ENCODE measurements at regions of chr3 and their contacts with region 1.

Region 1: GRCh38 chr3:27467545-27467944 is 16.6 kb downstream of the SLC4A7 start:
- DNase-seq: no peak
- H3K4me3 Mint-ChIP-seq: no peak overlapping the region
- H3K27ac Mint-ChIP-seq: peak overlapping the region; percentile 28
- H3K4me1 Mint-ChIP-seq: peaks cover 14% of the 10 kb centered on the region
- H3K27me3 Mint-ChIP-seq: no peaks in the 10 kb centered on the region

Region 2: DNA sequence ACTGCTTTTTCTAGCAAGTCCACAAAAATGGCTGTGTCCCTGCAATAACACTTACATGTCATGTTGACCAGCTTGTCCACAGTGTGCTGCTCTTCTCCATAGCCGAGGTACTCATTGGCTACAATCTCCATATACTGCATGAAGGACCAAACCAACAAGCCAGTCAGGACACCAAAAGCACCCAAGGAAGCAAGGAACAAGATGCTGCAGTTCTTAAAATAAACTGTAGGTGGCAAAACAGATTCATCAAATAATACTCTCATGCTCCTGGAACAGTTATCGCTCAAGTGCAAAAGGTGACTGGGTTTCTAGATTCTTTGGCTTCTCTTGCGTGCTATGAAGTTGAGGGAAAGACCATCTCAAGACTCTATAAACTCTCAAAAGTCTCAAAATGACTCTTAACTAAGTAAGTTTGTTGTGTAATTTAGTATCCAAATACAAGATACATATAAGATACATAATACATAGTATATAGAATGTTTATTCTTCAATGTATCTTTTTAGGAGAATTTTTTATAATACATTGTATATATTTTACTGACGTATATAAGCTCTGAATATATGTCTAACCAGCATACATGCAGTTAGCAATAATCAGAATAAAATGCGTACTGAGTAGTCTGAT is 155.4 kb before region 1 on chr3:
- CTCF ChIA-PET with region 1: interaction called, 12 read pairs
- POLR2A ChIA-PET with region 1: no interaction called
- intact Hi-C with region 1: loop called (anchors 1 kb)
- DNase-seq: no peak
- H3K4me3 Mint-ChIP-seq: no peak overlapping the region
- H3K27ac Mint-ChIP-seq: no peak overlapping the region
- H3K4me1 Mint-ChIP-seq: no peaks in the 10 kb centered on the region
- H3K27me3 Mint-ChIP-seq: no peaks in the 10 kb centered on the region

Region 3: DNA sequence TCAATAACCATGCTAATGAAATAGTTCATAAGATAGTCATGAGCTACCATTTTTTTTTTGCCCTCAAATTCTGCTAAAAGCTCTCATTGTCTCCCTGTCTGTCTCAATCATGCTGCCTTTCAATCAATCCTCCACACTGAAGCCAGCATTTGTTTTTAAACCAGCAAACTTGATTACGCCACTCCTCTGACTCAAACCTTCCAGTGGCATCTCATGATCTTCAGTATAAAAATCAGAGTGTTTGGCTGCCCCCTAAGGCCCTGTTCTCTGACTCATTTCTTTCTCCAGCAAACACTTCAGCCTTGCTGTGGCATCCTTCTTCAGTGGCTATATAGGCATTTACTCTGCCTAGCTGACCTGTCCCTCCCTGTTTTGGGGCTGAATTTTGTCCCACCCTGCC is 290.5 kb after region 1 on chr3:
- CTCF ChIA-PET with region 1: no interaction called
- POLR2A ChIA-PET with region 1: no interaction called
- intact Hi-C with region 1: no loop called
- DNase-seq: peak; percentile 43
- H3K4me3 Mint-ChIP-seq: no peak overlapping the region
- H3K27ac Mint-ChIP-seq: no peak overlapping the region
- H3K4me1 Mint-ChIP-seq: peaks cover 1% of the 10 kb centered on the region
- H3K27me3 Mint-ChIP-seq: no peaks in the 10 kb centered on the region

Measured in activated CD4-positive, alpha-beta memory T cell treated with anti-CD3 and anti-CD28 coated beads for 36 hours (primary cell).